Activated CD4-positive, alpha-beta T cell treated with anti-CD3 and anti-CD28 coated beads, Interleukin-2, amount 10 ng/mL, durations not matched to agents 24 days and 14 days (primary cell): ENCODE measurements at regions of chrX and their contacts with region 1.

Region 1: GRCh38 chrX:107654872-107655761 is 26.8 kb downstream of the PRPS1 start:
- DNase-seq: peak; percentile 89
- H3K4me3 Mint-ChIP-seq: no peak overlapping the region
- H3K27ac Mint-ChIP-seq: no peak overlapping the region
- H3K4me1 Mint-ChIP-seq: peaks cover 5% of the 10 kb centered on the region
- H3K27me3 Mint-ChIP-seq: no peaks in the 10 kb centered on the region

Region 2: DNA sequence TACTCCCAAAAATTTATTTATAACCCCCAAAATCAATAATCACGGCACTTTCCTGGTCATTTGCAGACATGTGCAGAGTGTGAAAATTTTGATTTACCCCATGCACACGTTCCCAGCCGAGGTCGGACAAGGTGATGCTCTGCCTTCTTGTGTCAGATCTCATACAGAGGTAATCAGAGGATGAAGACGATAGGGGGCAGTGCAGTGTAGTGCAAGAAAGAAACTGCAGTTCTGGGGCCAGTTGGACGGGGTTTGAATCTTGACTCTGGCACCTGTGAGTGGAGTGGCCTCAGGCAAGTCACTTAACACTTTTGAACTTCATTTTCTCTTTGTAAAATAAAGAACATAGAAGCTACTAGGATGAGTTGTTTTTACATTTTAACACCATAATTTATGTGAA is 117.3 kb before region 1 on chrX:
- intact Hi-C with region 1: loop called (anchors 10 kb)
- DNase-seq: peak; percentile 75
- H3K4me3 Mint-ChIP-seq: no peak overlapping the region
- H3K27ac Mint-ChIP-seq: no peak overlapping the region
- H3K4me1 Mint-ChIP-seq: no peaks in the 10 kb centered on the region
- H3K27me3 Mint-ChIP-seq: peaks cover 11% of the 10 kb centered on the region

Region 3: DNA sequence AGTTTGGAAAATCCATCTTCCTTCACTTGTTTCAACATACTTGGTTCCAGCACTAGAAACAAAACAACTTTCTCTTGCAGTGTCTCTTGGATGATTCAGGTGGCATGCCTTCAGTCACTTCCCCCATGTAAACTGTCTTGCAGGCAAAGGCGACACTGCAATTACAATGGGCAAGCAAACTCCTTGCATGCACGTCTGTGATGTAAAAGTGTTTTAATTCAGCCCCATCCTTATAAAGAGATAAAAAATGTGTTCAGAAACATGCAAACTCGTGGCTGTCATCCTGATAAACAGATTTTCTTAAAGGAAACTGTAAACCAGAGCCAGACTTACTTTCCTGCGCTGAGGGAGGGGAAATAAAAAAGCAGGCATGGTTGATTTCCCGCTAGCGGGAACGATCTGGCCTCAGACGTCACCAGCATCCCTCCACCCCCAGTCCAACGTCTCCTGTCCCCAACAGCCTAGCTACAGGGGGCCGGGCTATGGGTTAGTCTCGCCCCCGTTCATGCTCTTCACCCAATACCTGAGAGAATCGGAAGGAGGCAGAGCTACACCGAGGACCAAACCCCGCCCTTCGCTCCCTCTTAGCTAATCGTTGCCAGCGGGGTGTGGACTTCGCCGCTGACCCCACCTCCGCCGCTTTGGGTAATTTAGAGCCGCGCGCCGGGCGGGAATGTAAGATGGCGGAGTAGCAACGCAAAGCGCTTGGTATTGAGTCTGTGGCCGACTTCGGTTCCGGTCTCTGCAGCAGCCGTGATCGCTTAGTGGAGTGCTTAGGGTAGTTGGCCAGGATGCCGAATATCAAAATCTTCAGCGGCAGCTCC is 27.1 kb before region 1 on chrX and contains the start of gene PRPS1:
- intact Hi-C with region 1: loop called (anchors 2 kb)
- DNase-seq: peak; percentile 96
- H3K4me3 Mint-ChIP-seq: peak within 1 kb of the TSS; percentile 94
- H3K27ac Mint-ChIP-seq: peak within 1 kb of the TSS; percentile 95
- H3K4me1 Mint-ChIP-seq: peaks cover 22% of the 10 kb centered on the region
- H3K27me3 Mint-ChIP-seq: no peaks in the 10 kb centered on the region
- total RNA-seq, gene PRPS1: 112 and 115 TPM in 2 replicates

Region 4: DNA sequence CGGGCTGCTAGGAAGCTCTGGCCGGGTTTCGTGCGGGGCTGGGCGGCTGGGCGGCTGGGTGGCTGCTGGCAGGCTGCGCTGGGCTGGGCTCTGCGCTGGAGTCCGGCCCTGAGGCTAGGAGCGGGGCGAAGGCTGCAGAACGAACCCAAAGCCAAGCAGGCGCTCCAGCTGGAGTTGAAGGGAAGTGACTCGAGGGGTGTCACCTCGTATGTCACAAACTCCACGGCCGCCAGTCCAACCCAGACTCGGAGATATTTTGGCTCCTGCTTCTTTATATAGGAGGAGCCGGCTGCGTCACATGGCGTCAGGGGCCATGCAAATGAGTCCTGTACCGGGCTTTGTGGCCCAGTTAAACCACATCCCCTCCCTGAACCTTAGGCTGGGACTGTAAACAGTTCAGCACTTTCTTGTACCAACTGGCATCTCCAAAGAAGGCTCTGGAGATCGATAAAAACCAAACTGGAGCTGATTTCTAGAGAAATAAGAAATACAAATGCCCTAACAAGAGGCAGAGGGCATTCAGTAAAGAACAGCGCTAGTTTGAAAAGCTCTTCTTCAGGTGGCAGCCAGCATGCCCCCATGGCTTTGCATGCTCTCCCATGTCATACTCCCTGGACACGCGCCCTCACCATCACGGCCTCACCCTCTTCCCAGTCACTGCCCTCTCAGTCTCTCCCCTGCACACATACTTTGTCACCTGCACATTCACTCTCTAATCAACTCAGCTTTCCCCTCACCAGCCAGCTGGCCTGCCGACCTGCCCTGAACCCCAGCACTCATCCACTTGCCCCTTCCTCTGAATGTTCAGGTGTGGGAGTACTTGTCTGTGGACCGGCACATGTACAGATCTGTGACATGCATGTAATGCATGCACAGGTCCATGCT is 61.9 kb after region 1 on chrX:
- intact Hi-C with region 1: loop called (anchors 5 kb)
- DNase-seq: peak; percentile 96
- H3K4me3 Mint-ChIP-seq: peak overlapping the region; percentile 95
- H3K27ac Mint-ChIP-seq: peak overlapping the region; percentile 91
- H3K4me1 Mint-ChIP-seq: peaks cover 36% of the 10 kb centered on the region
- H3K27me3 Mint-ChIP-seq: no peaks in the 10 kb centered on the region

Region 5: GRCh38 chrX:107894038-107894437 is 238.9 kb after region 1 on chrX:
- intact Hi-C with region 1: loop called (anchors 1 kb)
- DNase-seq: peak; percentile 80
- H3K4me3 Mint-ChIP-seq: no peak overlapping the region
- H3K27ac Mint-ChIP-seq: no peak overlapping the region
- H3K4me1 Mint-ChIP-seq: no peaks in the 10 kb centered on the region
- H3K27me3 Mint-ChIP-seq: peaks cover 2% of the 10 kb centered on the region

Region 6: DNA sequence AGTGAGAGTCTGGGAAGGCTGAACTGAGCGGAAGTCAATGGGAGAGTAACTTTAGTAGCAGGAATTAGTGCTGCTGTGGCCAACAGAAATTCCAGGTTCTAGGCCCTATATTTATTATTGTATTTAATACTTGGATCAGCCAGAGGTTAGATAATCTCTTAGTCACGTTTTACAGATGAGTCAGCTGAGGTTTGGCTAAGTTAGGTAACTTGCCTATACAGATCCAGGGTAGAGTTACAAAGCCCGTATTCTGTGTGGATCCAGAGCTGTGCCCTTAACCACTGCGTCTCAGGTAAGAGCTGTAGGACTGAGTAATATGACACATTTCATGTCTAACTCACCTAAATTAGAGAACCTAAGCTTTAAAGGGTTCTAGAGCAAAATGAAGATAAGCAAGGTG is 415.8 kb after region 1 on chrX:
- intact Hi-C with region 1: loop called (anchors 10 kb)
- DNase-seq: no peak
- H3K4me3 Mint-ChIP-seq: no peak overlapping the region
- H3K27ac Mint-ChIP-seq: no peak overlapping the region
- H3K4me1 Mint-ChIP-seq: no peaks in the 10 kb centered on the region
- H3K27me3 Mint-ChIP-seq: peaks cover 4% of the 10 kb centered on the region